ENCODE measurements at regions of chr15 and their contacts with region 1.

Region 1: DNA sequence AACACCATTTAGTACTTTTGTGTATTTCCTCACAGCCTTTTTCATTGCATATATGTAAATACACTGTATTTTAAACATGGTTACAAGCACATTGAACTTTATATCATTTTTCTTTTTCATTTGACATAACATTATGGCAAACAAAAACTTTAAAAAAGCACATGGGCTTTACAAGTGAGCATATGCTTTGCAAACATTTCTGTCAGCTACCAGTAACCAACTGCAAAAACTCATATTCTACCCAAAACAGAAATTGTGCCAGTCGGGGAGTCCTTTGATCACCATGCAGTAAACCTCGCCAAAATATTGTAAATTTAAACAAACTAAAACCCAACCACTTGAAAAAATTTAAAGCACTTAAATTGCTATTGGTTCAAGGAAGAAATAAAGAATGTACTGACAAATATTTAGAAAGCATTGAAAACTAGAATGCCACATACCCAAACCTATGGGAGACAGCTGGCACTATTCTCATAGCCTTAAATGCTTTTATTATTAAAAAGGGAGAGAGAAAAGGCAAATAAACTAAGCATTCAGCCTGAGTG is 24.4 kb downstream of the ZNF710 start:
- DNase-seq: no peak
- ATAC-seq: no peak
- H3K4me3 Mint-ChIP-seq: no peak overlapping the region
- H3K27ac Mint-ChIP-seq: no peak overlapping the region
- H3K4me1 Mint-ChIP-seq: peaks cover 20% of the 10 kb centered on the region
- H3K27me3 Mint-ChIP-seq: no peaks in the 10 kb centered on the region
- CTCF ChIP-seq: no peak

Region 2: GRCh38 chr15:90013503-90013937 is 12.0 kb before region 1 on chr15:
- CTCF ChIA-PET with region 1: no interaction called
- POLR2A ChIA-PET with region 1: interaction called, 9 read pairs
- intact Hi-C with region 1: loop called (anchors 2 kb)
- DNase-seq: no peak
- ATAC-seq: peak; percentile 45
- H3K4me3 Mint-ChIP-seq: peak overlapping the region; percentile 48
- H3K27ac Mint-ChIP-seq: peak overlapping the region; percentile 20
- H3K4me1 Mint-ChIP-seq: peaks cover 38% of the 10 kb centered on the region
- H3K27me3 Mint-ChIP-seq: no peaks in the 10 kb centered on the region
- CTCF ChIP-seq: no peak

Region 3: GRCh38 chr15:90101969-90102890 is 76.7 kb after region 1 on chr15 and contains the start of gene IDH2:
- CTCF ChIA-PET with region 1: no interaction called
- POLR2A ChIA-PET with region 1: no interaction called
- intact Hi-C with region 1: no loop called
- DNase-seq: peak; percentile 78
- ATAC-seq: peak; percentile 88
- H3K4me3 Mint-ChIP-seq: peak within 1 kb of the TSS; percentile 89
- H3K27ac Mint-ChIP-seq: peak within 1 kb of the TSS; percentile 83
- H3K4me1 Mint-ChIP-seq: peaks cover 50% of the 10 kb centered on the region
- H3K27me3 Mint-ChIP-seq: peaks cover 9% of the 10 kb centered on the region
- CTCF ChIP-seq: no peak
- total RNA-seq, gene IDH2: 49.1 and 51.2 TPM in 2 replicates

Region 4: DNA sequence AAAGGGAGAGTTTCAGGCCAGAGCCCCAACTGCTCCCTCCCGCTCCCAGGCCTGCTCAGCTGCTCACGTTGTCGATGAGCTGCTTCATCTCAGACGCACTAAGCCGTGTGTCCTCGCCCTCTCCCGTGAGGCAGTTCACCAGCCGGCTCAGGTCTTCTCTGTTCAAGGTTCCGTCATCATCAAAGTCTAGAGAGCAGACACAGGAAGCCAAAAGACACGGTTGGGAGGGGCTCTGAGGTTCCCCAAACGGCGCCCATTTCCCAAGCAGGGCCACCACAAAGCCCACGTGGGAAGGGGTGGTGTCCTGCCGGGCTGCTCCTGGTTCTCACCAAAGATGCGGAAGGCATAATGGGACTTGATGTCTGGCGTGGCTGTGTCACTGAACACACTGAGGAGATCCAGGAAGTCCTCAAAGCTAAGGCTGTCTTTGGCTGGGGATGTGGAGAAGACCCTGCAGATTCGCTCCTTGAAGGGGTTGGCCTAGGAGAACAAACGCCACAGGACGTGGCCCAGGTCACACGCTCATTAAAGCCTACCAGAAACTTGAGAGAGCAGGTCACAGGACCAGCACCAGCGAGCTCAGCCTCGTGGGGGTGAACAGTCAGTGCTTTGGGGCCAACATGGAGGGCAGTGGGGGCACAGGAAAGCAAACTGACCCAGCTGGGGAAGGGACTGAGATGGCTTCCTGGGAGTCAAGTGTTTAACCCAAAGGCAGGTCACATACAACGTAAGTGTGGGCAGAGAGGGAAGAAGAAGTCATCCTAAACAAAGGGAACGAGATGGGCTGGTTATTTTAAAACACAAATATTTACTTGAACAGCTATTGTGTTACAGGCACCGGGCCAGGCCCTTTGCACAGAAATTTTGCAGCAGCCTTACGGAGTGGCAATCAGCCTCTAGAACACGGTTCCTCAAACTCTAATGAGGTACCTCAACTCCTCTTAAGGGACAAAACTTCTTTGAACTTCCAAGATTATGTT is 205.8 kb after region 1 on chr15:
- CTCF ChIA-PET with region 1: no interaction called
- POLR2A ChIA-PET with region 1: no interaction called
- intact Hi-C with region 1: no loop called
- DNase-seq: peak; percentile 50
- ATAC-seq: peak; percentile 46
- H3K4me3 Mint-ChIP-seq: peak overlapping the region; percentile 86
- H3K27ac Mint-ChIP-seq: peak overlapping the region; percentile 97
- H3K4me1 Mint-ChIP-seq: peaks cover 50% of the 10 kb centered on the region
- H3K27me3 Mint-ChIP-seq: no peaks in the 10 kb centered on the region
- CTCF ChIP-seq: no peak